Ascending aorta (tissue), 2 donors: ENCODE measurements at regions of chr1 and their contacts with region 1.

Region 1: GRCh38 chr1:150876119-150876454 is 312 bp downstream of the ARNT start:
- DNase-seq: peak; percentile 13 to 83
- H3K4me3 ChIP-seq: peak overlapping the region; percentile 87 to 99
- H3K27ac ChIP-seq: peak overlapping the region; percentile 97 to 99
- H3K4me1 ChIP-seq: no peaks in the 10 kb centered on the region
- H3K27me3 ChIP-seq: no peaks in the 10 kb centered on the region
- CTCF ChIP-seq: no peak

Region 2: GRCh38 chr1:150363426-150364230 is 512.5 kb before region 1 on chr1 and contains the start of gene RPRD2:
- intact Hi-C with region 1: loop called (anchors 10 kb)
- DNase-seq: peak; percentile 99 to 100
- H3K4me3 ChIP-seq: peak within 1 kb of the TSS; percentile 55 to 80
- H3K27ac ChIP-seq: peak within 1 kb of the TSS; percentile 93 to 94
- H3K4me1 ChIP-seq: peaks cover 0 to 2% of the 10 kb centered on the region in 2 donors
- H3K27me3 ChIP-seq: no peaks in the 10 kb centered on the region
- CTCF ChIP-seq: no peak
- total RNA-seq, gene RPRD2: 13.7 TPM

Region 3: DNA sequence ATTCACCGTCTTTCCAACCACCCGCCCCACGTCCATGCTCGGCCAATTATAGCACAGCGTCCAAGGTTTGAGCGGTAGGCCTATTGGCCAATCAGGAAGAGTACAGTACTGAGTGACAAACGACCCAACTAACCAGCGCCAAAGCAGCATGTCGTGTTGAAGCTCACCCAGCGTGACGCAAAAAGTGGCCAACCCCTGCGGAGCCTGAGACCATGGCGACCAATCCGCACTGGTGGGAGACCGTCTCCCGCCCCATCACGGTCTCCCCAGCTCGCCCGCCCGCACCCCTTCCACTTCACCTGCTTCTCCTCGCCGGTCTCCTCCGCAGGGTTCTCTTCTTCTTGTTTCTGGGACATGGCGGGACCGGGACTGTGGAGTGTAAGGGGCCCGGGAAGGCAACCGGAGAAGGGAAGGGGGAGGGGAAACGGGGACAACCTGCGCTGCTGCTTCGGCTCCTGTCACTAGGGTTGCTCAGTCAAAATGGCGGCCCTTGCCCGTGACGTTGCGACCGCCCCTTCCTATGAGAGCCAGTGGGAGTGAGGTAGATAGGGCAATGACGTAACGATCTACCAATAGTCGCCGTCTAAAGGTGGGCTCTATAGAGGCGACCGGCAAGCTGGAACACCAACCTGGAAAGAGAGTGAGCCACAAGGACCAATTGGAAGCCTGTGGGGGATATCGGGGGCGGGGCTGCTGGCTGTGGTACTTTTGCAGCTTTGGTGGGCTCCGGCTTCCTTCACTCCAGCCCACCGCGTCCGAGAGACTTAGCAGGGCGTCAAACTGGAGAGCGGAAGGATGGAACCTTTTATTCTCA is 246.8 kb before region 1 on chr1 and contains the start of gene ENSA:
- intact Hi-C with region 1: loop called (anchors 5 kb)
- DNase-seq: peak; percentile 97 to 99
- H3K4me3 ChIP-seq: peak within 1 kb of the TSS; percentile 83 to 85
- H3K27ac ChIP-seq: peak within 1 kb of the TSS; percentile 88 to 97
- H3K4me1 ChIP-seq: peaks cover 6 to 10% of the 10 kb centered on the region in 2 donors
- H3K27me3 ChIP-seq: no peaks in the 10 kb centered on the region
- CTCF ChIP-seq: no peak
- total RNA-seq, gene ENSA: 138 TPM

Region 4: DNA sequence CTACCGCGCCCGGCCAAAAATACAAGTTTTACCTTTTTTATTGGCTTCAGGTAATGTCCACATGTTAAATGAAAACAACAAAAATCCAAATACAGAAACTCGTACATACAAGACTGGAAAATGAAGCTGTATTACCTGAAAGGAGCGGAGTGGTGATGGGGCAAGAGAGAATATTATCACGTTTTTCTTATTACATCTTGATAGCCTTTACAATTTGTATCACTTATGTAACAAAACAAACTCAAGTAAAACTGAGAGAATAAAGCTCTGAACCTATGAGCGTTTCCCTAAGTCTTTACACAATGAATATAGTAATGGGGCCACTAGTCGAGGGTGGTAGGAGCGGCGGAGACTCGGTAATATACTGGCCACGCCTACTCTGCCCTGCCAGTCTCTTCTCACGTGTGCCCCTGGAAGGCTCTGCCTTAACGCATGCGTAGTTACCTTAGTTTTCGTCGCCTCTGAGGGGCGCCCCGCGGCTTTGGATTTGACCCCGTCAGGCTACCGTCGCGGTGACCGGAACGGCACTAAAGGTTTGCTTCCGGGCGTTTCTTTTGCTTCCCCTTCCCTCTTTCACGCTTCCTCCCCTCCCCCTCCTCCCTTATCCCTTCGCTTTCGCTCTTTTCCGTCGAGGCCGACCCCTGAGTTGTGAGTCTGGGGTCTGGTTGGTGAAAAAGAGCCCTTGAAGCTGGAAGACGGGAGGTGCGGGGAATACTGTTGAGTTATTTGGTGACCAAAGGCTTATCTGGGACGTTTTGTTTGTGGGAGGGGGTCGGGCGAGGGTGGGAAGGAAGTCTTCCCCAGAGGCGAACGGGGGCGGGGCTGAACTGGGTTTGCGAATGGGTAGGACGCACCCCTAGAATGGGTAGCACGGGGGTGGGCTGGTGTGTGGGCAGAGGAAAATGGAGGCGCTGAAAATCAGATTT is 50.0 kb after region 1 on chr1 and contains the start of gene SETDB1:
- intact Hi-C with region 1: loop called (anchors 2 kb)
- DNase-seq: peak; percentile 81 to 98
- H3K4me3 ChIP-seq: peak within 1 kb of the TSS; percentile 73 to 80
- H3K27ac ChIP-seq: peak within 1 kb of the TSS; percentile 71 to 84
- H3K4me1 ChIP-seq: peaks cover 0 to 4% of the 10 kb centered on the region in 2 donors
- H3K27me3 ChIP-seq: no peaks in the 10 kb centered on the region
- CTCF ChIP-seq: no peak
- total RNA-seq, gene SETDB1: 21.3 TPM

Region 5: GRCh38 chr1:151008190-151008860 is 132.2 kb after region 1 on chr1 and contains the start of gene PRUNE1:
- intact Hi-C with region 1: loop called (anchors 2 kb)
- DNase-seq: peak; percentile 84 to 97
- H3K4me3 ChIP-seq: peak within 1 kb of the TSS; percentile 70 to 71
- H3K27ac ChIP-seq: peak within 1 kb of the TSS; percentile 85 to 87
- H3K4me1 ChIP-seq: peaks cover 11 to 48% of the 10 kb centered on the region in 2 donors
- H3K27me3 ChIP-seq: no peaks in the 10 kb centered on the region
- CTCF ChIP-seq: no peak
- total RNA-seq, gene PRUNE1: 36.5 TPM